Naive thymus-derived CD8-positive, alpha-beta T cell (primary cell): ENCODE measurements at regions of chr2 and their contacts with region 1.

Region 1: GRCh38 chr2:232310121-232310520 is 68.4 kb upstream of the ALPP start:
- DNase-seq: peak in 1 of 10 donors; percentile 61
- ATAC-seq: peak; percentile 30 to 44
- H3K4me3 Mint-ChIP-seq: peak overlapping the region in 9 of 10 donors; percentile 50 to 82 (median 74)
- H3K27ac Mint-ChIP-seq: peak overlapping the region; percentile 89 to 97 (median 94)
- H3K4me1 Mint-ChIP-seq: peaks cover 50 to 95% (median 90%) of the 10 kb centered on the region in 4 donors
- H3K27me3 Mint-ChIP-seq: no peaks in the 10 kb centered on the region

Region 2: DNA sequence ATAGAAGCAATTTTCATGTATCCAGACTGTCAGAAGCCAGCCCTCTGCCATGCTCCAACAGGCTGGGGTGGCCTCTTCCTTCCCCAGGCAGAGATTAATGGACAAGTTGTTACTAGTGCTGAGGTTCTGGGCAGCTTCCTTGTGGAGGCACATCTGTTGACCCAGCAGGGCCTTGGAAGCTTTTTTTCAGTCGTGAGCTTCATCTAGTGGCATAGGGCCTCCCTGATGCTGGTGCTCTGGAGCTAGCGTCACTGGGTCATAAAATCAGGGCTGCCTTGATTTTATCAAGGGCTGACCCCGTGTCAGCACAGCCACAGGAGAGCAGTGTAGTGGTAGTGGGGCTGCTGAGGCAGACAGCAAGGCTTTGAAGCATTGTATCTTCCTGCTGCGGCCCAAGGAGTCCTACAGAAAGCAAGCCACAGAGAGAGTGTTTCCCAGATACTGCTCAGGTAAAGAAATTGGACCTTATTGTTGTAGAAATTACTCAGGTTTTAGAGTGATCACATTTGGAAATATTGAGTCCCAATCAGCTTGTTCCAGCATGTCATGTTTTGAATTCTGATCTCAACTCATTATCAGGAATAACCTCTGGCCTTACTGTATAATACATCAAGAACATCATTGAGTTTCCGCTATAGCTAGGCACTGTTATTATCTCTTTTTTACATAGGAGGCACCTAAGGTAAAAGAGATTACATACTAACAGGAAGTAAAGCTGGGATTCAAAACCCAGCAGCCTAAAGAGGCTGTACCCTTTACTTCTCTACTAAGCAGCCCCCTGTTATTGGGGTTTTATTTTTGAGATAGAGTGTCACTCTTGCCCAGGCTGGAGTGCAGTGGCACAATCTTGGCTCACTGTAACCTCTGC is 23.9 kb before region 1 on chr2:
- POLR2A ChIA-PET with region 1: interaction called, 46 read pairs
- DNase-seq: peak in 4 of 10 donors; percentile 3 to 28 (median 23)
- ATAC-seq: peak; percentile 72 to 76
- H3K4me3 Mint-ChIP-seq: peak overlapping the region in 9 of 10 donors; percentile 22 to 72 (median 48)
- H3K27ac Mint-ChIP-seq: peak overlapping the region; percentile 89 to 96 (median 94)
- H3K4me1 Mint-ChIP-seq: peaks cover 44 to 72% (median 59%) of the 10 kb centered on the region in 4 donors
- H3K27me3 Mint-ChIP-seq: no peaks in the 10 kb centered on the region

Region 3: DNA sequence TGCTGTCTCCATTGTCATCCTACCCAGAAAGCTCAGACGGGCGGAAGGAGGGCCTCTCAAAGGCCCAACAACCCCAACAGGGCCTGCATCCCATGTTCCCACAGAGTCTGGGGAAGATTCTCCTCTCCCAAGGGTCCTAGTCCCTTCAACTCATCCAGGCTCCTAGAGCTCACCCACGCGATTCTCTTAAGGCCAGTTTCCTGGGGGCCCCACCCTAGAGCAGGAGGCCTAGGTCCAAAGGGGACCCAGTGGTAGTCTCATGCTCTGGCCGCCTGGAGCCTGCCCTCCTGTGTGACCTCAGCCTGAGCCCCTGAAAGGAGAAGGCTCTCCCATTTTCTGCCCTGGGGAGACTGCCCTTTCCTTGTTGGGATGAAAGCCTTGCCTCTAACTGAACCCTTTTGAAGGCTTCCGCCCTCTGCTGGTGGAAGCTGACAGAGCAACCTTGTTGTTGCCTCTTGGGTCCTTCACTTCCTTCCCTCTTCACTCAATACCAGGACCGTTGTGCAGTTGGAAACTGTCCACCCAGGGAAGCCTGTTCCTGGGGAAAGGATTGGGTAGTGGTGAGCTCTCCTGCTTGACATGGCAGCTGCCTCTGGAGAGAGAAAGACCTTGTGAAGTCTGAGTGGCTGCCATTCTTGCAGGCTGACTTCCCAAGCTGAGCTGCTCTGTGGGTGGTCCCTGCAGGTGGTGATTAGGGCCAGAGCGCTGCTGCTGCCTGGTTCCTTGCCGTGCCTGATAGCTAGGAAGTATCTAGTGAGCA is 17.5 kb before region 1 on chr2:
- POLR2A ChIA-PET with region 1: interaction called, 46 read pairs
- DNase-seq: peak in 2 of 10 donors; percentile 30 to 72
- ATAC-seq: peak; percentile 40 to 50
- H3K4me3 Mint-ChIP-seq: peak overlapping the region in 3 of 10 donors; percentile 26 to 62 (median 43)
- H3K27ac Mint-ChIP-seq: peak overlapping the region; percentile 8 to 93 (median 57)
- H3K4me1 Mint-ChIP-seq: peaks cover 20 to 36% (median 28%) of the 10 kb centered on the region in 4 donors
- H3K27me3 Mint-ChIP-seq: no peaks in the 10 kb centered on the region

Region 4: DNA sequence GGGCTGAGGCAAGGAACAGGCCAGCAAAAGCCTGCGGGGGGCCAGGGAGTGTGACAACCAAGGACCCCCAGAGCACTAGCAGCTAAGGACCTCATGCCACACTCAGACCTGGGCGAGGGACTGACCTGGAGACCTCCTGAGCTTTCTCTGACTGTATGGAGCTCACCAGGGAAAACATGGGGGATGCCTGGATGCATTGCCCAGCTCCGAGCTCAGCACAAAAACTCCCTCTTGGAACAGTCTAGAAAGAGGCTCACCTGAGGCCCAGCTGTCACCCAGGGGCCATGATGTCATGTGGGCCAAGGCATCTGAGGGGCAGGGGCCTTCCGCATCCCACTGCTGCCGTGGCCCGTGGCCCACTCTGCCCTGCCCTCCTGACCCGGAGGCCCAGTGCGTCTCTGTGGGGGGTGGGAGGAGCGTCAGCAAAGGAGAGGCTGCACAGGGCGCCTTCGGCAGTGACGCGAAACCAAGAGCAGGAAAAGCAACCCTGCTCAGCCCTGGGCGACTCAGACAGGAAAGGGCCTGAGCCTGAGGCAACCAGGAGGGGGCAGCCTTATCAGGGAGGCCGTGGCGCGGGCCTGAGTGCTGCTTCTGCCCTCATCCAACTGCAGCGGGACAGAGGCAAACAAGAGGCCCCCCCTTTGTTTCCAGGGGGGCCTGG is 11.2 kb after region 1 on chr2:
- POLR2A ChIA-PET with region 1: interaction called, 80 read pairs
- DNase-seq: peak in 9 of 10 donors; percentile 34 to 81 (median 51)
- ATAC-seq: peak; percentile 56 to 58
- H3K4me3 Mint-ChIP-seq: peak overlapping the region in 9 of 10 donors; percentile 24 to 90 (median 78)
- H3K27ac Mint-ChIP-seq: peak overlapping the region; percentile 92 to 99 (median 96)
- H3K4me1 Mint-ChIP-seq: peaks cover 42 to 84% (median 77%) of the 10 kb centered on the region in 4 donors
- H3K27me3 Mint-ChIP-seq: no peaks in the 10 kb centered on the region

Region 5: DNA sequence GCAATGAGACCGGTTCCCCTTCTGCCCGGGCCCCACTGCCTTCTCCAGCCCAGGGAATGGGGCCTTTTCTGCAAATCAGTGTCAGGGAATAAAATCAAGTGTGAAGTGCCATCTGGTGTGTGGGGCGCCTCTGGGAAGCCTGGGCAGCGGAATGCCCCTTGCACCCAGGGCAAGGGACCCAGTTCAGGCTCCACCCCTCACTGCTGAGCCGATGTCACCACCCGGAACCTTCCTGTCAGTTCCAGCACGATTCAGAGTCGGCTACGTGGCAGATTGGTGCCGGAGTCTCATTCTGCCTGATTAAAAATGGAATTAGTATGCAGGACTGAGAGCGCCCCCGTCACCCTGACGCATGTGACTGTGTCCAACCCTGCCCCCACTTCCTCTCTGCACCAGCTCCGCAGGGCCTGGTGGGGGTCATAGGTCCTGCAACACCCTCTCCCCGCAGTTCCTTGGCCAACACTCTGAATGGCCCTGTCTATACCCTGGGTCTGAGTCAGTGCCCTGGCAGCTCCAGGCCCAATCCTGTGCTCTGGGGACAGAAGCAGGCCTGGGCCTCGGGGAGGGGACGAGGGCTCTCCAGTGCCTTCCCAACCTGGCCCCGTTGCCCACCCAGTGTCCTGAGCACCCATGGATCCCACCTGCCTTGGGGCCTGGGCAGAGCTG is 137.7 kb after region 1 on chr2:
- POLR2A ChIA-PET with region 1: no interaction called
- DNase-seq: no peak
- ATAC-seq: no peak
- H3K4me3 Mint-ChIP-seq: no peak overlapping the region
- H3K27ac Mint-ChIP-seq: no peak overlapping the region
- H3K4me1 Mint-ChIP-seq: peaks cover 0 to 2% (median 0%) of the 10 kb centered on the region in 4 donors
- H3K27me3 Mint-ChIP-seq: no peaks in the 10 kb centered on the region

Region 6: DNA sequence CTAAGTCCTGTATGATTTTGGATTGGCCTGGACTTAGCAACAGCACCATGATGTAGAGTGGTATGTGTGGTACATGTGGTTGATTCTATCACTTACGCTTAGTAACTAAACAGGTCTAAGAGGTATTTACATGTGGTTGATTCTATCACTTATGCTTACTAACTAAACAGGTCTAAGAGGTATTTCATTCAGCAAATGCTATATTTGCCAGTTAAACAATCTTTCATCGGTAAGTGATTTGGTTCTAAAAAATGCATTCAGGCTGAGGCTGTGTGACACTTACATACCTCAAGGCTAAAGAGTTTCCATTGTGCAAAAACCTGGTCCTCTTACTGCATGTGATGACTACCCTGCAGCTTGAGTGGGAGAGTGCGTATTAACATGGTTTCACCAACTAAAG is 253.5 kb after region 1 on chr2:
- POLR2A ChIA-PET with region 1: no interaction called
- DNase-seq: no peak
- ATAC-seq: no peak
- H3K4me3 Mint-ChIP-seq: no peak overlapping the region
- H3K27ac Mint-ChIP-seq: no peak overlapping the region
- H3K4me1 Mint-ChIP-seq: peaks cover 2 to 10% (median 4%) of the 10 kb centered on the region in 4 donors
- H3K27me3 Mint-ChIP-seq: no peaks in the 10 kb centered on the region